Panc1 (cell line): ENCODE measurements at regions of chr1 and their contacts with region 1.

Region 1: DNA sequence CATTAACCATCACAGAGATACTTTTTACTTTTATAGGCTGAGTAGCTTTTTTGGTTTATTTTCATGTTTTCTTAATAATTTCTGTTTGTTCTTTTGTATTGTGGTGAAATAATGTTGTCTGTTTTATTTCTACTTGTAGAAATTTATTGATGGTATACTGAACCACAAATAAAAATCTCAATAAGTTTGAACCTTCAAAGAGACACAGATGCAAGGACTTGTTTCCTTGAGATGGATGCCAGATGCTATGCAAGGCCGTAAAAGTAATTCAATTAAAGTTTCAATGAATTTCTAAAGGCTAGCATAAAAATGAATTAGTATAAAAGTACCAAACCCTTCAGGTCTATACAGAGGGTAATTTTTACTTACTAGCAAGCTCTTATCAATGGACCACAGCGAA is 873.5 kb downstream of the TTLL7 start:
- DNase-seq: no peak
- ATAC-seq: no peak
- H3K4me3 ChIP-seq: no peak overlapping the region
- H3K27ac ChIP-seq: no peak overlapping the region
- H3K4me1 ChIP-seq: no peaks in the 10 kb centered on the region
- H3K27me3 ChIP-seq: no peaks in the 10 kb centered on the region
- CTCF ChIP-seq: no peak

Region 2: DNA sequence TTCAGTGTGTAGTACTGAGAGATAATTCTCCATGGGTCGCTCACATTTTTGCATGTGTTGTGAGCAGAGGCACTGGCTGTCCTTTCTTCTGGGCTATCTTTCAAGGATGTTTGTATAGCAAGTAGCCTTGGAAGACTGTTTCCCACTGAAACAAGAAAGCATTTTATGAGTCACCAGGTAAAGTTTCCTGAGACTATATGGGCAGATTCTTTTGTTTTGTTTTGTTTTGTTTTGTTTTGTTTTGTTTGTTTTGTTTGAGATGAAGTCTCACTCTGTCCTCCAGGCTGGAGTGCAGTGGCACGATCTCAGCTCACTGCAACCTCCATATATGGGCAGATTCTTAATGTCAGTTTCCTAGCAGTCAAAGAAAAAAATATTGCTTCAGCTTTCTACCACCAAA is 39.1 kb before region 1 on chr1:
- CTCF ChIA-PET with region 1: no interaction called
- POLR2A ChIA-PET with region 1: no interaction called
- in situ Hi-C with region 1: no loop called
- intact Hi-C with region 1: no loop called
- DNase-seq: peak; percentile 61
- ATAC-seq: peak; percentile 72
- H3K4me3 ChIP-seq: no peak overlapping the region
- H3K27ac ChIP-seq: no peak overlapping the region
- H3K4me1 ChIP-seq: no peaks in the 10 kb centered on the region
- H3K27me3 ChIP-seq: no peaks in the 10 kb centered on the region
- CTCF ChIP-seq: no peak

Region 3: GRCh38 chr1:83104558-83104957 is 20.9 kb before region 1 on chr1:
- CTCF ChIA-PET with region 1: no interaction called
- POLR2A ChIA-PET with region 1: no interaction called
- in situ Hi-C with region 1: no loop called
- intact Hi-C with region 1: loop called (anchors 2 kb)
- DNase-seq: no peak
- ATAC-seq: no peak
- H3K4me3 ChIP-seq: no peak overlapping the region
- H3K27ac ChIP-seq: no peak overlapping the region
- H3K4me1 ChIP-seq: no peaks in the 10 kb centered on the region
- H3K27me3 ChIP-seq: no peaks in the 10 kb centered on the region
- CTCF ChIP-seq: no peak